Calu3 (cell line): ENCODE measurements at regions of chr17 and their contacts with region 1.

Region 1: GRCh38 chr17:73998653-73999645 is 204.5 kb upstream of the RPL38 start:
- DNase-seq: peak; percentile 81
- H3K4me3 Mint-ChIP-seq: no peak overlapping the region
- H3K27ac Mint-ChIP-seq: no peak overlapping the region
- H3K4me1 Mint-ChIP-seq: no peaks in the 10 kb centered on the region
- H3K27me3 Mint-ChIP-seq: peaks cover 54% of the 10 kb centered on the region
- CTCF ChIP-seq: peak; percentile 84

Region 2: GRCh38 chr17:73643001-73643851 is 355.7 kb before region 1 on chr17:
- CTCF ChIA-PET with region 1: no interaction called
- intact Hi-C with region 1: loop called (anchors 5 kb)
- DNase-seq: peak; percentile 43
- H3K4me3 Mint-ChIP-seq: peak overlapping the region; percentile 36
- H3K27ac Mint-ChIP-seq: no peak overlapping the region
- H3K4me1 Mint-ChIP-seq: no peaks in the 10 kb centered on the region
- H3K27me3 Mint-ChIP-seq: peaks cover 100% of the 10 kb centered on the region
- CTCF ChIP-seq: no peak